Endothelial cell of umbilical vein (primary cell): ENCODE measurements at regions of chr21 and their contacts with region 1.

Region 1: DNA sequence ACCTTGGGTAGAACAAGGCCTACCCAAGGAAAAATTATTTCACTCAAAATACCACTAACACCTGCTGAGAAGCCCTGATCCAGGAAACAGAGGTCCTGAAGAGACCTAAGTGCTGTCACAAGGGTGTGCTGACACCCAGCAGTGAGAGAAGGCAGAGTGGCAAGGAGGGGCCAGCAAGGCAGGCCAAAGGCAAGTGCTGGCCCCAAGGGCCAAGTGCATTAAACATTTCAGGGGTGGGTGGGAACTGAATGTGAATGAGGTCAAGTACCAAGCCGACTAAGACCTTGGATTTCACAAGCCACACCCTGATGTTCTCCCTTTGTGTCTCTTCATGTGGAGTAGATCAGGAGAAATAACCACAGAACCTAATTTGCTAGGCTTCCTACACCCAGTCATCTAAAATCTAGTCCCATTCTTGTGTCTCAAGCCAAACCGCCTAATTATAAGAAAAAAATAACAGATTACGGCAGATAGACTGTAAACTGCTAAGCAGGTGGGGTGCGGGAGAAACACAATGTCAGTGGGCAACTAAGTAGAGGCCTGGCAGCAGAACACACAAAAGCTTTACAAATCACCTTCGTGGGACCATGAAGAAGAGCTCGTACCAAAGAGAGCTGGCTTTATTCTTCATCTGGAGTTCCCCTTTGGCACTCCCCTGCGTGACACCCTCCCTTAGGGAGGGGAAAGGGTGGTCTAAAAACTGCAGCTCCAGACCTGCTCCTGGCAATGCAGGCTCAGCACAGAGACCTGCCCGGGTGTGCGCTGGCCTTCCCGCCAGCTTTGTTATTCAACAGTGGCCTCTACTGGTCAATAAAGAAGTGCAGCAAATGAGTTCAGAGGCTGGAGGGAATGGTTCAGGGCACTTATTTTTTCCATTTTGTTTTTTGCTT is 8.7 kb downstream of the UBE2G2 start:
- DNase-seq: peak; percentile 63
- H3K4me3 ChIP-seq: no peak overlapping the region
- H3K27ac ChIP-seq: no peak overlapping the region
- H3K4me1 ChIP-seq: no peaks in the 10 kb centered on the region
- H3K27me3 ChIP-seq: no peaks in the 10 kb centered on the region
- CTCF ChIP-seq: peak; percentile 70 to 71
- POLR2A ChIP-seq: no peak

Region 2: DNA sequence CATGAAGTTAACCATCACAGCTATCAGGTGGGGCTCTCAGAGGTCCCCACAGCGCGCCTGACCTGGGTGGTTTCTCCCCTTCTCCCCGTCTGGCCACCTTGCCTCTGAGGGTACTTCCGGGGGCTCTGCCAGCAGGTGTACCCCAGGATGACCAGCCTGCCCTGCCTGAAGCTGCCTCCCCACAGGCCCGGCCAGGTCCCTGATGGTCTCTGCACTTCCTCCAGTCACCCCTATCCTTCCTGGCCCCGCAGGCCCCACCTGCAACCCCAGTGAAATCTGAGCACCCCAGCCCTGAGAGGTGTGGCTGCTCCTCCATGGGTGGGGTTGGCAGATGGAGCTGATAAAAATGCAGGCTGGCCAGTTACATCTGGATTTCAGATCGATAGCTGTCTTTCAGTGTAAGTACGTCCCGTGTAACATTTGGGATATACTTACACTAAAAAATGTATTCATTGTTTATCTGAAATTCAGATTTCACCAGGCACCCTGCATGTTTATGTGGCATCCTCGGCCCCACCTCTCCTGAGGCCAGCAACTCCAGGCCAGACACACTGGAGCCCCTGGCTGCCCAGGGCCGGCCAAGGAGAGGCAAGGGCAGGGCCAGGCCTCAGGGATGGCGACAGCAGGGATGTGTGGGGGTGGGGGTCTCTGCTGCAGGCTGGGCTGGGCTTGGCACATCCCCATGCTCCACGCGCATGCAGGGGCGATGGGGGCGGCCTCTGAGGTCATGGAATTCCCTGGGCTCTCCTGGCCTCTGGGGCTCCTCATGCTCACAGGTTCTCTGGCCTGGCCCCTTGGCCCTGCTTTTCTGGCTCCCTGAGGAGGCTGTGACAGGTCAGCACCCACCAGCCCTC is 312.5 kb before region 1 on chr21:
- CTCF ChIA-PET with region 1: interaction called, 11 read pairs
- POLR2A ChIA-PET with region 1: no interaction called
- dilution Hi-C with region 1: no loop called
- intact Hi-C with region 1: no loop called
- DNase-seq: no peak
- H3K4me3 ChIP-seq: no peak overlapping the region
- H3K27ac ChIP-seq: no peak overlapping the region
- H3K4me1 ChIP-seq: no peaks in the 10 kb centered on the region
- H3K27me3 ChIP-seq: no peaks in the 10 kb centered on the region
- CTCF ChIP-seq: no peak
- POLR2A ChIP-seq: no peak

Region 3: DNA sequence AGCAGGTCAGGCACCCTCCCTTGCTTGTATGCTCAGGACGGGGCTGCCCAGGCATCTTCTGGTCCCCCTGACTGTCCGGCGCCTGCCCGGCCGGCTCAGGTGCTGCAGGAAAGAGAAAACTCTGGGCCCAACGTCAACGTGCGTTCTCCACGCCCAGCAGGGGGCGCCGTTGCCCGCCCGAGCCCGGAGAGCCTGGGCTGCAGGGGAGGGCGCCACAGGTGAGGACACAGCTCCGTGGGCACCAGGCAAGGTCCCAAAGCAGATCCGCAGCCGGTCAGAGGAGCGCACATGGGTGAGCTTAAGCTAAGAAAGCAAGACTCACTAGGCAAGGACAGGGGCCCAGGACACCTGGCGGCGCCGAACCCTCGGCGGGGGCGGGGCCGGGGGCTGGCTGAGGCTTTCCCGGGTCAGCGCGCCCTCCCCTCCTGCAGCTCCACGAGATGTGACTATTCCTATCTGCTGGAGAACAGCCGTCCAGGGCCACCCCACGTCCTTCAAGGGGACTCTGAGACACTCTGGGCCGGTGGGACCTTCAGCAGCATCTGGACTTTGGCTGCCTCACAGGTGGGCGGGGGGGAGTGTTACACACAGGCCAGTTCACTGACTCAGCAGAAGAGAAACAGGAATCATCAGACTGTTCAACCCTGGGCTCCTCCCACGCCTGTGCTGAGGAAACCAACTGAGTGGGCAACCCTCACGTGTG is 282.3 kb before region 1 on chr21:
- CTCF ChIA-PET with region 1: interaction called, 125 read pairs
- POLR2A ChIA-PET with region 1: no interaction called
- dilution Hi-C with region 1: no loop called
- intact Hi-C with region 1: no loop called
- DNase-seq: peak; percentile 33
- H3K4me3 ChIP-seq: no peak overlapping the region
- H3K27ac ChIP-seq: no peak overlapping the region
- H3K4me1 ChIP-seq: no peaks in the 10 kb centered on the region
- H3K27me3 ChIP-seq: no peaks in the 10 kb centered on the region
- CTCF ChIP-seq: peak; percentile 82 to 90
- POLR2A ChIP-seq: no peak

Region 4: GRCh38 chr21:44709426-44710293 is 83.3 kb before region 1 on chr21:
- CTCF ChIA-PET with region 1: interaction called, 10 read pairs
- POLR2A ChIA-PET with region 1: no interaction called
- dilution Hi-C with region 1: no loop called
- intact Hi-C with region 1: no loop called
- DNase-seq: no peak
- H3K4me3 ChIP-seq: no peak overlapping the region
- H3K27ac ChIP-seq: no peak overlapping the region
- H3K4me1 ChIP-seq: peaks cover 5% of the 10 kb centered on the region
- H3K27me3 ChIP-seq: peaks cover 79 to 84% of the 10 kb centered on the region in 2 experiments
- CTCF ChIP-seq: no peak
- POLR2A ChIP-seq: no peak

Region 5: GRCh38 chr21:44752634-44753291 is 40.2 kb before region 1 on chr21:
- CTCF ChIA-PET with region 1: interaction called, 10 read pairs
- POLR2A ChIA-PET with region 1: no interaction called
- dilution Hi-C with region 1: no loop called
- intact Hi-C with region 1: loop called (anchors 1 kb)
- DNase-seq: peak; percentile 27
- H3K4me3 ChIP-seq: no peak overlapping the region
- H3K27ac ChIP-seq: no peak overlapping the region
- H3K4me1 ChIP-seq: peaks cover 42% of the 10 kb centered on the region
- H3K27me3 ChIP-seq: peaks cover 3 to 4% of the 10 kb centered on the region in 2 experiments
- CTCF ChIP-seq: peak; percentile 18 to 21
- POLR2A ChIP-seq: no peak

Region 6: DNA sequence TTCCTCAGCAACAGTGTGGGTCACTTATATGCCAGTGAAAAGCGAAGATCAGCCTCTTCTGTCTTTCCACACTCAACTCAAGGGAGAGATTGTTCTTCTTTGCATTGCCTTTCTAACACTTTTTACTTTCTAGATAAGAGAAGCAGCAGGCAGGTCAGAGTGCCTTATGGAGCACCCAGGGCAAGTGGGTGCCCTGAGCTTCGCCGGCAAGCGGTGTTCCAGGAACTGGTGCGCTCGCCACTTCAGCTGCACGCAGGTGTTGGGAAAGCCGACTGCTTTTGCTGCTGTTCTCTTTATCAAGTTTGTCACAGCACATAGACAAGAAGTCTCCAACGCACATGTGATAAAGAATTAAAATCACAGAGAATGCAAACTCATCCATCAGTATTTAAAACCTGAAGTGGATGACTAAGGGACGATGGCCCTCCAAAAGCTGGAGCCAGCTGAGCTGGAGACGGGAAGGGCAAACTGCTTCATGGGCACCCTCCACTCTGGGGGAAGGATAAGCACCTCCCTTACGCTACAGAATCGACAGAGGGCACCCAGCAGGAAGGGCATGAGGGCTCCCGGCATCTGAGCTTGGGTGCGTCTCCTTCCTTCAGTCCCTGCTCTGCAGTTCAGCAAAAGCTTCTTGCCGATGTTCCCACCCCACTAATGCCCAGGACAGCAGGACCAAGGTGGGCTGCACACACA is 12.0 kb before region 1 on chr21:
- CTCF ChIA-PET with region 1: interaction called, 27 read pairs
- POLR2A ChIA-PET with region 1: no interaction called
- dilution Hi-C with region 1: no loop called
- intact Hi-C with region 1: no loop called
- DNase-seq: no peak
- H3K4me3 ChIP-seq: no peak overlapping the region
- H3K27ac ChIP-seq: no peak overlapping the region
- H3K4me1 ChIP-seq: no peaks in the 10 kb centered on the region
- H3K27me3 ChIP-seq: no peaks in the 10 kb centered on the region
- CTCF ChIP-seq: no peak
- POLR2A ChIP-seq: no peak